ENCODE measurements at regions of chr1 and their contacts with region 1.

Region 1: GRCh38 chr1:32240140-32240951 is 6.7 kb upstream of the FAM167B start:
- DNase-seq: peak; percentile 98
- ATAC-seq: peak; percentile 84
- H3K4me3 Mint-ChIP-seq: peak overlapping the region; percentile 84
- H3K27ac Mint-ChIP-seq: peak overlapping the region; percentile 78
- H3K4me1 Mint-ChIP-seq: peaks cover 21% of the 10 kb centered on the region
- H3K27me3 Mint-ChIP-seq: peaks cover 3% of the 10 kb centered on the region; the same call in 1 of the 2 replicates
- CTCF ChIP-seq: no peak

Region 2: DNA sequence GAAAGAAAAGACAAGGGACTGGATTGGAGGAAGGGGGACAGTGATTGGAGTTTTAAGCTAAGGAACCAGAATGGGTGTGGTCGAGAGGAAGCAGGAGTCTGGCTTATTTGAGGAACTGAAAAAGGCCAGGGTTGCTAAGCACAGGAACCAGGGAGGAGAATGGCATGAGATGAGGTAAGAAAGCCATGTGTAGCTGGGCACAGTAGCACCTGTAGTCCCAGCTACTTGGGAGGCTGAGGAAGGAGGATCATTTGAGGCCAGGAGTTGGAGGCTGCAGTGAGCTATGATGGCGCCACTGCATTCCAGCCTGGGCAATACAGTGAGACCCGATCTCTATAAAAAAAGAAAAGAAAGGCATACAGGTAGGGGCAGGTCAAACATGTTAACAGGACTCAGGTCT is 234.8 kb before region 1 on chr1:
- CTCF ChIA-PET with region 1: no interaction called
- POLR2A ChIA-PET with region 1: no interaction called
- DNase-seq: no peak
- ATAC-seq: no peak
- H3K4me3 Mint-ChIP-seq: no peak overlapping the region
- H3K27ac Mint-ChIP-seq: no peak overlapping the region
- H3K4me1 Mint-ChIP-seq: peaks cover 28% of the 10 kb centered on the region
- H3K27me3 Mint-ChIP-seq: peaks cover 4% of the 10 kb centered on the region; the same call in 1 of the 2 replicates
- CTCF ChIP-seq: no peak

Region 3: DNA sequence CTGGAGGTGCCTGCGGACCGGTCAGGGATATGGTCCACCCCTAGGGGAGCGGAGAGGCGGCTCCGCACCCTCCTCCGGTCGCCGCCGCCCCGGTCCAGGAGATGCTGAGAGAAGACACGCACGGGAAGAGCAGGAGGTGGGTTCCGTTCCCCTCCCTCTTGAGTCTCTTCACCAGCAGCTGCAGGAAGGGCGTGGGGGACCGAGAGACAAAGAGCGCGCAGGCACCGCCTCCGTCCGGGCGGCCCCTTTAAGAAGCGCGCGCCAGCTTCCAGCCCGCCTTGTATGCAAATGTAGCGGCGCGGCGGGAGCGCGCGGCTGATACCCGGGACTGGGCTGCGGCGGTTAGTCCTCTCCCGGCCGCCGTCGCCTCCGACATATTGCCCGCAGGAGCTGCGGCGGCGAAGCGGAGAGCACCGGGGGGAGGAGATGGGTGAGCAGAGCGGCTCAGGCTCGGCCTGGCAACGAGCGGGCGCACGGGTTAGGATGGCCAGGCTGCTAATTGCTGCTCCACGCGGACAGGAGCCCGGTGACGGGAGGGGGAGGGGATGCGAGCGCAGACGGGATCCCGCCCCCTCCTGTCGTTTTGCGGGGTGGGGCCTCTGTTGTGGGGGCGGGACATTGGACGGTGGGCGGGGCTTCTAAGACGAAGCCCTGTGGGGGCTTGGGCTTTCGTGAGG is 167.6 kb before region 1 on chr1 and contains the start of gene TMEM39B:
- CTCF ChIA-PET with region 1: interaction called, 4 read pairs
- POLR2A ChIA-PET with region 1: interaction called, 11 read pairs
- DNase-seq: peak; percentile 95
- ATAC-seq: peak; percentile 72
- H3K4me3 Mint-ChIP-seq: peak within 1 kb of the TSS; percentile 77
- H3K27ac Mint-ChIP-seq: peak within 1 kb of the TSS; percentile 96
- H3K4me1 Mint-ChIP-seq: peaks cover 22% of the 10 kb centered on the region
- H3K27me3 Mint-ChIP-seq: no peaks in the 10 kb centered on the region; the same call in 1 of the 2 replicates
- CTCF ChIP-seq: no peak
- total RNA-seq, gene TMEM39B: 18.8 to 25.8 TPM (median 23.8 TPM) in 3 replicates

Region 4: GRCh38 chr1:32144033-32144432 is 96.3 kb before region 1 on chr1:
- CTCF ChIA-PET with region 1: no interaction called
- POLR2A ChIA-PET with region 1: no interaction called
- DNase-seq: no peak
- ATAC-seq: no peak
- H3K4me3 Mint-ChIP-seq: no peak overlapping the region
- H3K27ac Mint-ChIP-seq: no peak overlapping the region
- H3K4me1 Mint-ChIP-seq: no peaks in the 10 kb centered on the region
- H3K27me3 Mint-ChIP-seq: no peaks in the 10 kb centered on the region
- CTCF ChIP-seq: no peak

Region 5: DNA sequence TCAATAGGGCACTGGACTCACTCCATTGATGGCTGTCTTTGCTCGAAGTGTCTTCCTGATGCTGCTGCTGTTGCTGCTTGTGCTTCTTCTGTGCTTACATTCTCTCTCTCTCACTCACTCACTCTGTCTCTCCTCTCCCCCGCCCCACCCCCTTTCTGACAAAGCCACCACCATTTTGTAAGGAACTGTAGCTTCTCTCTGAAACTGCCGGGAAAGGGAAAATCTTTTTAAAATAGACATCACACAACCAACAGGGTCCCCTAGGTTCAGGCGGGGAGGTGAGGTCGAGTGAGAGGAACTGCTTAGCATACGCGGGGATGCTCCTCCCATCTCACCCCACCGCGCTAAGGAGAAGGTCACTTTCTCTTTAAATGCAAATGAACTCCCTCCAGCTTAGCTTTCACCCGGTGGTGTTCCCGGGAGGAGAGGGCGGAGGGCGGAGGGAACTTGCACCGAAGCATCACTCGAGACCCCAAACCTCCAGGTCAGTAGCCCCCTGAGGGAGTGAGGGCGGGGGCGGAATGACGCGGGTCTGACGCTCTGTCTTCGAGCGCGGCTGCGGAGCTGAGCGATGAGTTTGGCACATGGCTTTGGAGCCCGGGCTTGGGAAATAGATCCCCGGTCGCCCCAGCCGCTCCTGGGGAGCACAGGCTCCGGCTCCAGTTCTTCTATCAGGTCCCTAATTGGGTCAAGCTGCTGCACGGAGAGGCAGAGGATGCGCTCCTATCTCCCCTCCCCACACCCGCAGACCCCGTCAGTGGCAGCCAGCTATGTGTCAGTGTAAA is 39.9 kb before region 1 on chr1 and contains the start of gene CCDC28B:
- CTCF ChIA-PET with region 1: interaction called, 14 read pairs
- POLR2A ChIA-PET with region 1: interaction called, 6 read pairs
- DNase-seq: peak; percentile 71
- ATAC-seq: peak; percentile 71
- H3K4me3 Mint-ChIP-seq: peak within 1 kb of the TSS; percentile 84
- H3K27ac Mint-ChIP-seq: peak within 1 kb of the TSS; percentile 69
- H3K4me1 Mint-ChIP-seq: peaks cover 40% of the 10 kb centered on the region
- H3K27me3 Mint-ChIP-seq: peaks cover 8% of the 10 kb centered on the region
- CTCF ChIP-seq: no peak
- total RNA-seq, gene CCDC28B: 29.0 to 34.4 TPM (median 29.9 TPM) in 3 replicates

Region 6: GRCh38 chr1:32273388-32274208 is 33.3 kb after region 1 on chr1:
- CTCF ChIA-PET with region 1: interaction called, 14 read pairs
- POLR2A ChIA-PET with region 1: interaction called, 16 read pairs
- DNase-seq: peak; percentile 79
- ATAC-seq: peak; percentile 95
- H3K4me3 Mint-ChIP-seq: peak overlapping the region; percentile 67
- H3K27ac Mint-ChIP-seq: peak overlapping the region; percentile 94
- H3K4me1 Mint-ChIP-seq: peaks cover 38% of the 10 kb centered on the region
- H3K27me3 Mint-ChIP-seq: no peaks in the 10 kb centered on the region
- CTCF ChIP-seq: no peak

Region 7: GRCh38 chr1:32335790-32336590 is 95.6 kb after region 1 on chr1 and contains the start of gene MARCKSL1:
- CTCF ChIA-PET with region 1: interaction called, 3 read pairs
- POLR2A ChIA-PET with region 1: interaction called, 10 read pairs
- DNase-seq: peak; percentile 82
- ATAC-seq: peak; percentile 43
- H3K4me3 Mint-ChIP-seq: peak within 1 kb of the TSS; percentile 95
- H3K27ac Mint-ChIP-seq: peak within 1 kb of the TSS; percentile 96
- H3K4me1 Mint-ChIP-seq: peaks cover 44% of the 10 kb centered on the region
- H3K27me3 Mint-ChIP-seq: peaks cover 16% of the 10 kb centered on the region
- CTCF ChIP-seq: no peak
- total RNA-seq, gene MARCKSL1: 442 to 450 TPM (median 443 TPM) in 3 replicates

Region 8: DNA sequence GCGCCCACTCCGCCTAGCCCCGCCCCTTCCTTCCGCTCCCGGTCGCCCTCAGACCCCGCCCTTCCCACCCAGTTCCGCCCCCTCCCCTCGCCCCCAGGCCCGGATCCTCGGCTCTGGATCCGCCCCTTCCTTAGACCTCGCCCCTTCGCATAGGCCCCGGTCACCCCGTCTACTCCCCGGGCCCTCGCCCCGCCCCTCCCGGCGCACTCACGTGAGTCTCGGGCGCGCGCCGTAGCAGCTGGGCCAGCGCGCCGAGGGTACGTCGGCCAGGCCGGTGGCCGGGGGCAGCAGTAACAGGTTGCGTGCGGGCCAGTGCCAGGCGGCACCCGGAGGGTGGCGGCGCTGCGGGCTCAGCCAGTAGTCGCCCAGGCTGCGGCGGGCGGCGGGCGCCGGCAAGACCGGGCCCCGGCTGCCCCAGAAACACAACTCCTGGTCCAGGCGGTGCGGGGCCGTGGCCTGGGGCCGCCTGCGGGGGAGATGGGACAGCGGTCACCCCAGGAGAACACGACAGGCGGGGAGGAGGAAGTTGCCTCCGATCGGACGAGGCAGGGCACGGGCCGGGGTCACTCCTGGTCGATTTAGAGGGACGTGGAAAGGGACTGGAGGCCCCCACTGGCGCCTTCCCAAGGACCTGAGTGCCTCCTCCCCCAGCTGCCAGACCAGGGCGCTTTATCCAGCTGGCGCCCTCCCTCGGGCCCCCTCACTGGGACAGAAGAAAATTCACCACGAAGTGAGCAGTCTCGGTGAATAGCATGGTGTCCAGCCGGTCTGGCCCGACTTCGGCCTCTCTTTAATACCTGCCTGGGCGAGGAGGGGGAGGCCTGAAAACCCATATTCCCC is 111.3 kb after region 1 on chr1:
- CTCF ChIA-PET with region 1: interaction called, 11 read pairs
- POLR2A ChIA-PET with region 1: no interaction called
- DNase-seq: peak; percentile 96
- ATAC-seq: peak; percentile 96
- H3K4me3 Mint-ChIP-seq: peak overlapping the region; percentile 80
- H3K27ac Mint-ChIP-seq: peak overlapping the region; percentile 84; the same call in 1 of the 2 replicates
- H3K4me1 Mint-ChIP-seq: peaks cover 18% of the 10 kb centered on the region
- H3K27me3 Mint-ChIP-seq: peaks cover 55% of the 10 kb centered on the region
- CTCF ChIP-seq: no peak